ENCODE measurements at regions of chr5 and their contacts with region 1.

Region 1: DNA sequence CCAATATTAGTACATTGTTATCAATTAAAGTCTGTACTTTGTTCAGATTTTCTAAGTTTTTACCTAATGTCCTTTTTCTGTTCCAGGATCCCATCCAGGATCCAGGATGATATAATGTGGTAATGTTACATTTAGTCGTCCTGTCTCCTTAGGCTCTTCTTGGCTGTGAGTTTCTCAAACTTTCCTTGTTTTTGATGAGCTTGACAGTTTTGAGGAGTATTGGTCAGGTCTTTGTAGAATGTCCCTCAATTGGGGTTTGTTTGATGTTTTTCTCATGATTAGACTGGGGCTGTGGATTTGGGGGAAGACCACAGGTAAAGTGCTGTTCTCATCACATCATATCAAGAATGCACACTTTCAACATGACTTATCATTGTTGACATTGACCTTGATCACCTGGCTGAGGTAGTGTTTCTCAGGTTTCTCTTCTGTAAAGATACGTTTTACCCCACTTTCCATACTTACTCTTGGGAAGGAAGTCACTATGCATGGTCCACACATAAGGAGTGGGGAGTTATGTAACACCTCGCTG is 9.6 kb downstream of the NDFIP1 start:
- DNase-seq: peak; percentile 35
- H3K4me3 Mint-ChIP-seq: no peak overlapping the region
- H3K27ac Mint-ChIP-seq: peak overlapping the region; percentile 84
- H3K4me1 Mint-ChIP-seq: peaks cover 84% of the 10 kb centered on the region
- H3K27me3 Mint-ChIP-seq: no peaks in the 10 kb centered on the region

Region 2: GRCh38 chr5:142128675-142129208 is 10.5 kb after region 1 on chr5:
- CTCF ChIA-PET with region 1: interaction called, 7 read pairs
- intact Hi-C with region 1: loop called (anchors 1 kb)
- DNase-seq: no peak
- H3K4me3 Mint-ChIP-seq: no peak overlapping the region
- H3K27ac Mint-ChIP-seq: peak overlapping the region; percentile 57
- H3K4me1 Mint-ChIP-seq: peaks cover 69% of the 10 kb centered on the region
- H3K27me3 Mint-ChIP-seq: no peaks in the 10 kb centered on the region